Right ventricle myocardium inferior (tissue), 1 donor: ENCODE measurements at regions of chr21 and their contacts with region 1.

Region 1: DNA sequence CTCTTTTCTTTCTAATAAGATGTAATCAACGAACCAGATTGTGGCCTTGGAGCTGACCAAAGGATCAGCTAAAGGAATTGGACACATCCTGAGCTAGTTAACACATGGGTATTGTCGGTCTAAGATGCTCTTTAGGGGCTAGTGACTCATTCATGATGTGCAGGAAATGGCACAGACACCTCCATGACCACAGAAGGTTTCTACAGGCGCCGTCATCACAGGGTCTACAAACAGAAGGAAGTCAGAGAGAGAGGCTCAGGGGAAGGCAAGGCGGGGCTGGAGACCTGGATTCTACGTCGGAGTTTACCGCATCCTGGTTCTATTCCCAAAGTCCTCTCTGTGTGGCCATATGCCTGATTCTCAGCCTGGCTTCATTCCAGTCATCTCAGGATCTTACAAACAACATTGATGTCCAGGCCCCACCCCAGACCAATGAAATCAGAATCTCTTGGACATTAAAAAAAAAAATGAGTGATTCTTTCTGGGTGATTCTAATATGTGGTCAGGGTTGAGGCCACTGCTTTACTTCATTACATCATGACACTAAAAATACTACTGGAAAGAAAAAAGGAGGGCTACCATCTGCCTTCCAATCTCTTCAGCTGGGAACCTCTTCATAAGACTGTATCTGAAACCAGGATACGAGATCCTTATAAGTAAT is 11.8 kb upstream of the KCNJ15 start:
- DNase-seq: no peak
- ATAC-seq: no peak

Region 2: DNA sequence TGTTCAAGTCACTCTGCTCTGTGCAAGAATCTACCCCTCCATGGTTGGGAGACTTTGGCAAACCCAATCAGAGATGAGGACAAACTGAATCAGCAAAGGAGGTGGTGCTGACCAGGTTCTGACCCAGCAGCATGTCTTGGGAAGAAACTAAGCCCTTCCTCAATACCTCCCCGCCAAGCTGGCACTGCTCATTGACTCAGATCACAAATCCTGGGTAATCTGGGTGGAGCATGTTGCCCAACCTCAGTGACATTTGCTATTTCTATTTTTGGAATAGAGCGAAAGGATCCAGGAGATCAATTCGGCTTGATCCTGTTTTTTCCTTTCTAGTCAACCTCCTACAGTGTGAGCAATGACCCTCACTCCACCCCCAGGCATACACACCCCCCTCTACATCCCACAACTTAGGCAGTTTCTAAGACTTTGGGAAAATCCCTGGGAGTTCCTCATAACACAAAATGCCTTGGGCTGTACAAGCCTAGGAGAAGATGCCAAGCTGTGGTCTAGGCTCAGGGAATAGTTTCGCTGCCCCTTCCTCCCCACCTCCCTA is 162.0 kb before region 1 on chr21:
- intact Hi-C with region 1: loop called (anchors 5 kb)
- DNase-seq: no peak
- ATAC-seq: no peak